Activated B cell treated with CpG ODN at 0.5 μM for 24 hours (primary cell): ENCODE measurements at regions of chr17 and their contacts with region 1.

Region 1: DNA sequence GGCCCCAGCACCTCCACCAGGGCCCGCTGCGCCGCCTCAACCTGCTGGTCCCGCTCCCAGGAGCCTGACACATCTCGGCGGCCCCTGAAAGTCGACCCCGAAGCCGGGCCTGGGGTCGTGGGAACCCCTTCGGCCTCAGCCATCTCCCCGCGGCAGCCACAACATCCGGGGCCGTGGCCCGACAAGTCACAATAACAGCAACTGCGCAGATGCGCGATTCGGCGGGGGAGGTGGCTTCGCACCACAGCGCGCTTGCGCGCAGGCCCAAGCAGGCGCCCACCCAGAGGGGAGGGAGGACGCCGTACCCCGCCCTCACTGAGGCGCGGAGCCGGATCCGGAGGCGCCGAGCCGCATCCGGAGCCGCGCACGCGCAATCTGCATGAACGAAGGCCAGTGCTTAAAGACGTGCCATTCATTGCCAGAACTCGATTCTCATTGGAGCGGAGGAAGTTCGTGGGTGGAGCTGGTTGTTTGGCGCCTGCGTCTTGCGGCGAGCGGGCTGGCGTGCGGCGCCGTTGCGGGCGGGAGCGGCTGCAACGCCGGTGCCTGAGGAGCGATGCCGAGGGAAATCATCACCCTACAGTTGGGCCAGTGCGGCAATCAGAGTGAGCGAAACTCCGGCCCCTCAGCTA is at the starts of genes RETREG3 and TUBG1:
- DNase-seq: peak; percentile 98
- ATAC-seq: peak; percentile 90
- H3K4me3 Mint-ChIP-seq: peak within 1 kb of the TSS; percentile 100
- H3K27ac Mint-ChIP-seq: peak within 1 kb of the TSS; percentile 98
- H3K4me1 Mint-ChIP-seq: peaks cover 47% of the 10 kb centered on the region
- H3K27me3 Mint-ChIP-seq: no peaks in the 10 kb centered on the region
- CTCF ChIP-seq: no peak
- total RNA-seq, gene RETREG3: 60.0 and 63.5 TPM in 2 replicates
- total RNA-seq, gene TUBG1: 25.0 and 26.8 TPM in 2 replicates

Region 2: DNA sequence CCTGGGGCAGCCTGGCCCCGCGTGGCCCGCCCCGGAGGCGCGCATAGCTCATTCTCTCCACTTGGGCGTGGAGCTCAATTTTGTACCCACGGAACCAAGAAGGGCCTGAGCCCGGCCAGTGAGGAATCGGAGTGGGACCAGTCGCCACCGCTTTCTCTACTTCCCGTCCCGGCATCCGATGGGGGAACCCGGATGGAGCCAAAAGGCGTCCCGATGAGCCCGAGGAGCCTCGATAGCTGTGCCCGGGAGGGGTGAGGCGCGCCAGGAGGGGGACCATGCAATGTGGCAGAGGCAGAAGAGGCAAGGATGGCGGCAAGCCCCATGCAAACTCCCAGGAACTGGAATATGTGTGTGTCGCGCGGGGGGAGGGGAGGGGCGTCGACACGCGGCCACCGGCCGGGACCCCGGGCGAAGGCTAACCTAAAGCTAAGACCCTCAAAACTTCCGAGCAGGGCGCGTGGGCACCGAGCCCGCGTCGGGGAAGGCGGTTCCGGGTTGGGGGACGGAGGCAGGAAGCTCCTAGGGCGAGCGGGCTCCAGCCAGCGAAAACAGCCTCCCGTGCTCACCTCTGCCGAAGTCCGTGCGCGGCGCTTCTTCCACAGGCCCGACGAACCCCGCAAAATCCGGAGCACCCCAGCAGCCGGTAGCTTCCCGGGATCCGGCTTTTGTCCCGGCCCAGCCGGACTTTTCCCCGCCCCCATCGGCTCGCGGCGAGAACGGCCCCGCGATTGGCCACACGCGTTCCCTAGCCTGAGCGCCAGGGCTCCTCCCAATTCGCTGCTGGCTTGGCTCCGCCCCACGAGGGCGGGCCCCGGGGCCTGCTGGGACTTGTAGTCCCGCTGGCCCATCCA is 690.8 kb before region 1 on chr17 and contains the start of gene ACLY:
- CTCF ChIA-PET with region 1: no interaction called
- POLR2A ChIA-PET with region 1: no interaction called
- intact Hi-C with region 1: no loop called
- DNase-seq: peak; percentile 96
- ATAC-seq: peak; percentile 99
- H3K4me3 Mint-ChIP-seq: peak within 1 kb of the TSS; percentile 92
- H3K27ac Mint-ChIP-seq: peak within 1 kb of the TSS; percentile 84
- H3K4me1 Mint-ChIP-seq: peaks cover 31% of the 10 kb centered on the region
- H3K27me3 Mint-ChIP-seq: no peaks in the 10 kb centered on the region
- CTCF ChIP-seq: no peak
- total RNA-seq, gene ACLY: 133 and 143 TPM in 2 replicates

Region 3: DNA sequence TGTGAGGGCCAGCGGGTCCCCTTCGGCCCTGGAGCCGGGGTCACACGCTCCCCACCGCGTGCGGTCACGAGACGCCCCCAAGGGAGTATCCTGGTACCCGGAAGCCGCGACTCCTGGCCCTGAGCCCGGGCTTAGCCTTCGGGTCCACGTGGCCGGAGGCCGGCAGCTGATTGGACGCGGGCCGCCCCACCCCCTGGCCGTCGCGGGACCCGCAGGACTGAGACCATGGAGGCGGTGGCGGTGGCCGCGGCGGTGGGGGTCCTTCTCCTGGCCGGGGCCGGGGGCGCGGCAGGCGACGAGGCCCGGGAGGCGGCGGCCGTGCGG is 73.3 kb before region 1 on chr17 and contains the start of gene NAGLU:
- CTCF ChIA-PET with region 1: no interaction called
- POLR2A ChIA-PET with region 1: interaction called, 14 read pairs
- intact Hi-C with region 1: no loop called
- DNase-seq: peak; percentile 95
- ATAC-seq: peak; percentile 94
- H3K4me3 Mint-ChIP-seq: peak within 1 kb of the TSS; percentile 89
- H3K27ac Mint-ChIP-seq: peak within 1 kb of the TSS; percentile 83
- H3K4me1 Mint-ChIP-seq: peaks cover 34% of the 10 kb centered on the region
- H3K27me3 Mint-ChIP-seq: no peaks in the 10 kb centered on the region
- CTCF ChIP-seq: no peak
- total RNA-seq, gene NAGLU: 27.8 and 33.9 TPM in 2 replicates

Region 4: DNA sequence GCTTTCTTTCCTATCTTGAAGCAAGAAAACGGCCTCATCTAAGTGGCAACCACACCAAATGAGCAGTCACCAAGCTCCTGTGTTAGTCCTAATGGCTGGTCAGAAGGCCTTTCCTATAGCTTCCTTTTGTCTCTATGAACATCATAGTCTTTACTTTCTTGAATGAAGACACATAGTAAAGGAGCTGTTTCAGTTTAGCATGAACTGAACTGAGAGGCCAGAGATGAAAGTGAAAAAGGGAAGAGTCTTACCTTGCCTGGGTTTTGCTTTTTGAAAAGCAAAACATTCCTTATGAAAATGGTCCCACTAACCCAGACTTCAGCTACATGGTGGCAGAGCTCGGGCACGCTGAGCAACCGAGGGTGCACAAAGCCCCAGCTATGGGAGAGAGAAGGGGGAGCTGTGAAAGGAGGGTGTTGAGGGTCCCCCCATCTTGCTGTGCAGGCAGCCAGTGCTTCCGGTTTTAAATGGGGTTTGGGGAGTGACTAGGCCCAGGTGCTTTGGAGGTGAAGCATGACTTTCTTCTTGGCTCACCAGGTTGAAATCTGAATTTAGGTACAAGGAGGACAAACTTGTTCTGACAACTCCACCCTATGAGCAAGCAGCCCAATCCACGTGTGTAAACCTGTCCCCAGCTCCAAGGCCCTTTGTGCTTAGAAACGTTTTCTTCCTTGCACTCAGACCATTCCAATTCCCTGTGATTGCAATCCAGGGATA is 22.6 kb before region 1 on chr17:
- CTCF ChIA-PET with region 1: no interaction called
- POLR2A ChIA-PET with region 1: interaction called, 12 read pairs
- intact Hi-C with region 1: no loop called
- DNase-seq: no peak
- ATAC-seq: peak; percentile 56
- H3K4me3 Mint-ChIP-seq: peak overlapping the region; percentile 73
- H3K27ac Mint-ChIP-seq: peak overlapping the region; percentile 95
- H3K4me1 Mint-ChIP-seq: peaks cover 31% of the 10 kb centered on the region
- H3K27me3 Mint-ChIP-seq: no peaks in the 10 kb centered on the region
- CTCF ChIP-seq: no peak

Region 5: GRCh38 chr17:42659079-42659931 is 50.0 kb after region 1 on chr17 and contains the start of gene TUBG2:
- CTCF ChIA-PET with region 1: interaction called, 3 read pairs
- POLR2A ChIA-PET with region 1: interaction called, 3 read pairs
- intact Hi-C with region 1: loop called (anchors 5 kb)
- DNase-seq: peak; percentile 68
- ATAC-seq: peak; percentile 84
- H3K4me3 Mint-ChIP-seq: peak within 1 kb of the TSS; percentile 90
- H3K27ac Mint-ChIP-seq: peak within 1 kb of the TSS; percentile 74
- H3K4me1 Mint-ChIP-seq: peaks cover 32% of the 10 kb centered on the region
- H3K27me3 Mint-ChIP-seq: peaks cover 8% of the 10 kb centered on the region
- CTCF ChIP-seq: no peak
- total RNA-seq, gene TUBG2: 8.6 and 9.4 TPM in 2 replicates

Region 6: DNA sequence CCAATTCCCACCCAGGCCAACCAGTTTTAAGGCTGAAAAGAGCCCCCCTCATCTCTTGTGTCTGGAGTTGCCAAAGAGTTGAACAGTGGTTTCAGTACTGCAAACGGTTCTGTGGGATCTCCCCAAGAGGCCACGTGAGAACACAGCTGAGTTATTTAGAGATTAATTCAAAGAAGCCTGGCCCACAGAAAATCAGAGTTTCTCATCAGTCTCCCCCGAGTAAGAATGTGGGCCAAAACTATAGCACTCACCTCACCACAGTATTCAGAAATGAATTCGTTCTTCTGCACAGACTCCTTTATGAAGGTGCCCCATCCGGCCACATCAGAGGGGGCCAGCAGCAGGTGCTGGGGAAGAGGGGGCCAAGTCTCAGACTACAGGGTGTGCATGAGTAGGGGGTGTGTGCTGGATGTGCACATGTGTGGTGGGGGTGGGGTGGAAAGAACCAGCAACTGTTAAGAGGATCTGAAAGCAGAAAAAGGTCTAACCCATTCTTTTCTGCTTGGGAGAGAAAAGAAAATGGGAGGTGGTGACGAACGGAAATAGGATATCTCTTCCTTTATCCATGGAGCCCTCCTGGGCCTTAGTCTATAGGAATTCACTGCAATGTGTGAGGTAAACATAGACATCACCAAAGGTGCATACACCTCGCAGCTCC is 95.7 kb after region 1 on chr17:
- CTCF ChIA-PET with region 1: no interaction called
- POLR2A ChIA-PET with region 1: interaction called, 7 read pairs
- intact Hi-C with region 1: loop called (anchors 1 kb)
- DNase-seq: no peak
- ATAC-seq: peak; percentile 78
- H3K4me3 Mint-ChIP-seq: peak overlapping the region; percentile 74
- H3K27ac Mint-ChIP-seq: peak overlapping the region; percentile 94
- H3K4me1 Mint-ChIP-seq: peaks cover 61% of the 10 kb centered on the region
- H3K27me3 Mint-ChIP-seq: no peaks in the 10 kb centered on the region
- CTCF ChIP-seq: no peak

Region 7: DNA sequence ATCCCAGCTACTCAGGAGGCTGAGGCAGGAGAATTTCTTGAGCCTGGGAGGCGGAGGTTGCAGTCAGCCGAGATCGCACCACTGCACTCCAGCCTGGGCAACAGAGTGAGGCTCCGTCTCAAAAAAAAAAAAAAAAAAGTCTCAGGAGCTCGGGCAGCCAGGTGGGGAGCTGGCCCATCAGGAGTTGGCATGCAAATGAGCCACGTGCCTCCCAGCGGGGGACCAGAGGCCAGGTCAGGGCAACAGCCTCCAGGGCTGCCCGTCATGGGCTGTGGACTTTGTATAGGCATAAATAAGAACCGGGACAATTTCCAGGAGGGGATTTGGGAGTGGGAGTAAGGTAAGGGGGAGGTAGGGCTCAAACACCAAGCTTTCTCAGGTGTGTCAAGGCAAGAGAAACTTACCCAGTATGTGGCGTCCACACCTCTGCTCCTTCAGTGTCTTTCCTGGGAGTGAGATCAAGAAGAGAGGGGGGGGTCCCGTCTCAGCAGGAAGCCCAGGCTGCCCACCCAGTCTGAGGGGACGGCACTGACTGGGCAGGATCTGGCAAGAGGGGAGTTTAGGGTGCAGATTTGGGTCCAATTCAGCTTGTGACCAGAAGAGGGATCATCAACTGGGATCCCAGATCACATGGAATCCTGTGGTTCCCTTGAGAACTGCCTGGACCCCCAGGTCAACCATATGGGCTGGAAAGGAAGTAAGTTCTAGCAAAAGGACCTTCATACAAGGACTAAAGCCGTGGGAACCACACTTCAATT is 269.0 kb after region 1 on chr17:
- CTCF ChIA-PET with region 1: no interaction called
- POLR2A ChIA-PET with region 1: no interaction called
- intact Hi-C with region 1: no loop called
- DNase-seq: no peak
- ATAC-seq: no peak
- H3K4me3 Mint-ChIP-seq: no peak overlapping the region
- H3K27ac Mint-ChIP-seq: no peak overlapping the region
- H3K4me1 Mint-ChIP-seq: no peaks in the 10 kb centered on the region
- H3K27me3 Mint-ChIP-seq: peaks cover 17% of the 10 kb centered on the region
- CTCF ChIP-seq: no peak